Activated CD4-positive, alpha-beta memory T cell treated with anti-CD3 and anti-CD28 coated beads for 36 hours (primary cell): ENCODE measurements at regions of chr19 and their contacts with region 1.

Region 1: GRCh38 chr19:15432629-15433518 is 14.1 kb upstream of the AKAP8L start:
- DNase-seq: peak; percentile 95
- H3K4me3 Mint-ChIP-seq: peak overlapping the region; percentile 85
- H3K27ac Mint-ChIP-seq: peak overlapping the region; percentile 85
- H3K4me1 Mint-ChIP-seq: peaks cover 31% of the 10 kb centered on the region
- H3K27me3 Mint-ChIP-seq: no peaks in the 10 kb centered on the region

Region 2: GRCh38 chr19:15125232-15126067 is 307.4 kb before region 1 on chr19:
- CTCF ChIA-PET with region 1: no interaction called
- POLR2A ChIA-PET with region 1: no interaction called
- intact Hi-C with region 1: loop called (anchors 1 kb)
- DNase-seq: peak; percentile 99
- H3K4me3 Mint-ChIP-seq: peak overlapping the region; percentile 100
- H3K27ac Mint-ChIP-seq: peak overlapping the region; percentile 99
- H3K4me1 Mint-ChIP-seq: peaks cover 30% of the 10 kb centered on the region
- H3K27me3 Mint-ChIP-seq: no peaks in the 10 kb centered on the region

Region 3: DNA sequence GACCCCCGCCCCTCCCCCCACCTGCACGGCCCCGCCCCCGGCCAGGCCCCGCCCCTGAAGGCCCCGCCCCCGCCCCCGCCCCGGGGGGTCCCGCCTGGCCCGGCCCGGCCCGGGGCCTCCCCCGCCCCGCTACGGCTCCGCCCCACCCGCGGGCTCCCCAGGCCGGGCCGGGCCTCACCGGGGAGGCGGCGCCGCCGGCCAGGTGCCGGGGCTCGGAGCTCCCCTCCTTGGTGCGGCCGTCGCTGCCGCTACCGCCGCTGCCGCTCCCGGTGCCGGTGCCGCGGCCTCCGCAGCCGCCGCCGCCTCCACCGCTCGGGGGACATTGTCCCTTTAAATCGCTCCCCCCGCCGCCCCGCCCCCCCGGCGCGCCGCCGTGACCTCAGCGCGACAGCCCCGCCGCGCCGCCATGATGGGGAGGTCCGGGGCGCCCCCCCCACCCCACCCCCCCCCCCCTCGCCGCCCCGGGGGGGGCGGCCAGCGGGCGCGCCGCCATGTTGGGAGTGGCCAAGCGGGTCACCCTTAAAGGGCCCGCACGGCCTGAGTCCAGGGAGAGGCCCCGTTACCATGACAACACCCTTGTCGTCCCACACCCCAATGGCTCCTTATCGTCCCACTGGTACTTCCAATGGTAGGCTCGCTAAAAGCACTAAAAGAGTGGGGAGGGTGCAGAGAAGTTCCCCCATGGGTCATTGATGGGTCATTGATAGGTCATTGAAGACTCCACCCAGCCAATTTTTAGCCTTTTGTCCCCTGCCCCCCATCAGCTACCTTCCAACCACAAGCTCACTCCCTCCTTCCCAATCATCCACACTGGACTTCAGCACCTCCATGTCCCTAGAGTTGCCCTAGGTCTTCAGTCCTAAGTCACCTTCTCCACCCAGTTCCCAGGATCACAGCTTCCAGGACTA is 17.0 kb after region 1 on chr19 and contains the start of gene WIZ:
- CTCF ChIA-PET with region 1: interaction called, 3 read pairs
- POLR2A ChIA-PET with region 1: interaction called, 3 read pairs
- intact Hi-C with region 1: loop called (anchors 2 kb)
- DNase-seq: peak; percentile 88
- H3K4me3 Mint-ChIP-seq: peak within 1 kb of the TSS; percentile 62
- H3K27ac Mint-ChIP-seq: peak within 1 kb of the TSS; percentile 81
- H3K4me1 Mint-ChIP-seq: peaks cover 14% of the 10 kb centered on the region
- H3K27me3 Mint-ChIP-seq: no peaks in the 10 kb centered on the region
- total RNA-seq, gene WIZ: 18.2 to 21.4 TPM